ENCODE measurements at regions of chr2 and their contacts with region 1.

Region 1: GRCh38 chr2:201860636-201861066 is 54.3 kb downstream of the CDK15 start:
- DNase-seq: no peak
- ATAC-seq: peak; percentile 83 to 94 (median 87)
- H3K4me3 ChIP-seq: no peak overlapping the region
- H3K27ac ChIP-seq: no peak overlapping the region
- H3K4me1 ChIP-seq: peaks cover 9% of the 10 kb centered on the region
- H3K27me3 ChIP-seq: no peaks in the 10 kb centered on the region
- CTCF ChIP-seq: peak; percentile 93

Region 2: GRCh38 chr2:201795607-201796477 is 64.8 kb before region 1 on chr2:
- intact Hi-C with region 1: loop called in 1 of 2 experiments (anchors 5 kb)
- DNase-seq: no peak
- ATAC-seq: peak; percentile 66 to 80 (median 70)
- H3K4me3 ChIP-seq: no peak overlapping the region
- H3K27ac ChIP-seq: no peak overlapping the region
- H3K4me1 ChIP-seq: no peaks in the 10 kb centered on the region
- H3K27me3 ChIP-seq: no peaks in the 10 kb centered on the region
- CTCF ChIP-seq: peak; percentile 65

Region 3: GRCh38 chr2:201813996-201814760 is 46.5 kb before region 1 on chr2:
- intact Hi-C with region 1: no loop called
- DNase-seq: no peak
- ATAC-seq: no peak
- H3K4me3 ChIP-seq: no peak overlapping the region
- H3K27ac ChIP-seq: no peak overlapping the region
- H3K4me1 ChIP-seq: no peaks in the 10 kb centered on the region
- H3K27me3 ChIP-seq: no peaks in the 10 kb centered on the region
- CTCF ChIP-seq: no peak

Region 4: DNA sequence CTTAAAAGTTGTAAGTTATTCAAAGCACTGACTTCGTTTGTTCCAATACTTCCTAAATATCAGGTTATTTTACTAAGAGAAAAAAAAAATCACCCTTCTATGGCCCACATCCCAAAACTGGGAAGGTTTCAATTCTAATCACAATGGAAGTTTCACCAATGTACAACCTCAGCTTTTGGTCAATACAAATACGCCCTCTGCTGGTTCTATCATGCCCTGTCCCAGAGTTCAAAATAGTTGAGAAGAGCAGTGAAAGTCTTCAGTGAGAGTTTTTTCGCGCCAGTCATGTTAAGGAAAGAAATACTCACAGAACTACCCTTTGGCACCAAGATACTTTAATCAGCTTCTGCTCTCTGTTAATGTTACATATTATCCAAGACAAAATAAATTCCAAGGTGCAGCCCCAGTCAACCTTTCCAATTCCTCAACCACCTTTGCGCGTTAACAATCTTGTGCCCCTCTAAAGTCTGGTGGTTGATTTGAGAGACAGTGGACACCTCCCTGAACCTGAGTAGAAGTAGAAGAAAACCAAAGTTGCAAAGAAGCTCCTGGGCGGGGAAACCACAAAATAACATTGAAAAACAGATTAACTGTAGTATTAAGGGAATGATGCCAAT is 317.8 kb after region 1 on chr2:
- intact Hi-C with region 1: loop called (anchors 1 to 2 kb)
- DNase-seq: no peak
- ATAC-seq: peak; percentile 72 to 96 (median 87)
- H3K4me3 ChIP-seq: no peak overlapping the region
- H3K27ac ChIP-seq: no peak overlapping the region
- H3K4me1 ChIP-seq: no peaks in the 10 kb centered on the region
- H3K27me3 ChIP-seq: no peaks in the 10 kb centered on the region
- CTCF ChIP-seq: peak; percentile 90

Region 5: GRCh38 chr2:202375609-202376408 is 515.2 kb after region 1 on chr2 and contains the start of gene BMPR2:
- intact Hi-C with region 1: loop called in 1 of 2 experiments (anchors 5 kb)
- DNase-seq: peak; percentile 90 to 95
- ATAC-seq: peak; percentile 88 to 92 (median 92)
- H3K4me3 ChIP-seq: peak within 1 kb of the TSS; percentile 77
- H3K27ac ChIP-seq: peak within 1 kb of the TSS; percentile 90
- H3K4me1 ChIP-seq: peaks cover 13% of the 10 kb centered on the region
- H3K27me3 ChIP-seq: no peaks in the 10 kb centered on the region
- CTCF ChIP-seq: no peak
- total RNA-seq, gene BMPR2: 21.3 to 43.2 (median 34.4) TPM